Cardiac septum (tissue), 1 donor: ENCODE measurements at regions of chrX and their contacts with region 1.

Region 1: DNA sequence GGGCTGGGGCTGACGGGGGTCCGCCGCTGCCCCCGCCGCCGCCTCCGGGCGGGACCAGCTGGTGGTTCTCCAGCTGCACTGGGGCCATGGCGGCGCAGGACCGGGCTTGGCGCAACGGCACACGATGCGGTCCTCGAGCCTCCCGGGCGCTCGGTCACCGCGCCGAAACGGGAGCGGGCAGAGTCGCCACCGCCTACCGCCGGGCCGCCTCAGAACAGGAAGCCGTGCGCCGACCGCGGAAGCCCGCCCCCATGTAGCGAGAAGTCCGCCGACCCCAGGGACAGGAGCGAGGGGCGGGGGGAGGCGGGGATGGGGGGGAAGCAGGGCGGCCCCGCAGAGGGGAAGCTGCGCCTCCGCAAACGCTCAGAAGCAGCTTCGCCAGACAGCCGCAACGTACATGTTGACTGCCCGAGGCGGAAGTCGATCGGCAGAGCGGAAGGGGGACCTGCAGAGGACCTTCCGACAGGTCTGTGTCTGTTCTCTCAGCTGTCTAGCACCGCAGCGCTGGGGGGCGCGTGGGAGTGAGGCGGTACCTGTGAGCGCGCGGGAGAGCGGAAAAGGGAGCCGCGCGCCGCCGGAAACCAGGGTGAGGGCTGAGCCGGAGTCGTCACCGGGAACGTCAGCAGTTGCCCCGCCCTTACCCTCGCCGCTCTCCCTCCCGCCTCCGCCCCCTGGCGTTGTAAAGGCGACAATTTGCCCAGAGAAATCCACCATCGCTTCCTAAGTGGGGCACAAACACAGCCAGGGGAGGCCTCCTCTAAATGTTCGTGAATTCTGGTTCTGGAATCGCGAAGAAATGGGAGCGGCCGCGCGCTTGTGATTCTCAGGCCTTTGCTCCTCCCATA is at the start of gene MED14:
- DNase-seq: peak; percentile 95
- total RNA-seq, gene MED14: 38.3 TPM

Region 2: GRCh38 chrX:41084044-41084892 is 348.7 kb after region 1 on chrX:
- intact Hi-C with region 1: loop called (anchors 10 kb)
- DNase-seq: peak; percentile 98